Gastrocnemius medialis (tissue), 4 donors: ENCODE measurements at regions of chr2 and their contacts with region 1.

Region 1: DNA sequence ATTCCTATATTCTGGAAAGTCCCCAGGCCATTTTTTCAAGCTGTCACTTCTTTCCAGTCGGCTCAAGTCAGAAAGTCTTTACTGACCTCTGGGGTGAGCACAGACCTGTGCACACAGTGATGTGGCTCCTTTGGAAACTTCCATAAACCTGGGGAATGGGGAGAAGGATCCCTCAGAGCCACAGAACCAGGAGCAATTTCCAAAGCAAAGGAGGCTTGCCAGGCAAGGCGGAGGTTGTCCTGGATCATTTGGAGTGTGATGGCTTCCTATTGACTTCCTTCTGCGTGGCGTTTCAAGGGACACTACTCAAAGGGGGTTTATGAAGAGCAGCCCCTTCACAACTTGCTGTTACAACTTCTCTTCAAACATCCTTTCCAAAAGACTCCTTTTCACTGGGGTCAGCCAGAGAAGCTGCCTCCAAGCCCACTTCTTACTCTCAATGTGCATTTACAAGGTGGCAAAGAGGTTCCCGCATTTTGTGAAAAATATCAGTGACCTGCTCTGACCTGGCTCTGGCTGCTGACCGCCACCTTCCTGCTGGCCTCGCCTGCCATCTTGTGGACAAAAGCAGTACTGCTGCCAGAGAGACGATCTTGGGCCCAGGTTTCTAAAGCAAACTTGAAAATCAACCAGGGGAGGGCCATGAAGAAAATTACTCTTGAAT is 18.2 kb upstream of the TMEM247 start:
- DNase-seq: peak; percentile 55 to 63
- ATAC-seq: peak; percentile 56 to 67
- H3K4me3 ChIP-seq: no peak overlapping the region
- H3K27ac ChIP-seq: peak overlapping the region in 1 of 4 donors; percentile 13
- H3K4me1 ChIP-seq: peaks cover 7 to 8% of the 10 kb centered on the region in 2 donors
- H3K27me3 ChIP-seq: no peaks in the 10 kb centered on the region
- CTCF ChIP-seq: peak; percentile 95 to 99 (median 97)
- POLR2A ChIP-seq: no peak

Region 2: GRCh38 chr2:46010925-46011490 is 450.1 kb before region 1 on chr2:
- in situ Hi-C with region 1: no loop called
- intact Hi-C with region 1: loop called (anchors 2 kb)
- DNase-seq: no peak
- ATAC-seq: no peak
- H3K4me3 ChIP-seq: no peak overlapping the region
- H3K27ac ChIP-seq: no peak overlapping the region
- H3K4me1 ChIP-seq: peaks cover 0 to 4% of the 10 kb centered on the region in 2 donors
- H3K27me3 ChIP-seq: no peaks in the 10 kb centered on the region
- CTCF ChIP-seq: peak; percentile 24 to 60 (median 47)
- POLR2A ChIP-seq: no peak